ENCODE measurements at regions of chr15 and their contacts with region 1.

Region 1: GRCh38 chr15:94097552-94097951 is 133.8 kb upstream of the MCTP2 start:
- DNase-seq: no peak
- ATAC-seq: no peak

Region 2: GRCh38 chr15:94212291-94212690 is 114.7 kb after region 1 on chr15:
- intact Hi-C with region 1: no loop called
- DNase-seq: no peak
- ATAC-seq: no peak

Region 3: GRCh38 chr15:95032156-95032555 is 934.6 kb after region 1 on chr15:
- intact Hi-C with region 1: loop called (anchors 5 kb)
- DNase-seq: no peak
- ATAC-seq: no peak

Measured in sciatic nerve (tissue), 2 donors.